ENCODE measurements at regions of chr3 and their contacts with region 1.

Region 1: GRCh38 chr3:99250272-99250671 is 348.8 kb upstream of the DCBLD2 start:
- DNase-seq: peak; percentile 75
- ATAC-seq: peak; percentile 68
- H3K4me3 ChIP-seq: no peak overlapping the region
- H3K27ac ChIP-seq: no peak overlapping the region
- H3K4me1 ChIP-seq: peaks cover 54% of the 10 kb centered on the region
- H3K27me3 ChIP-seq: no peaks in the 10 kb centered on the region
- CTCF ChIP-seq: no peak

Region 2: GRCh38 chr3:99084826-99085225 is 165.4 kb before region 1 on chr3:
- CTCF ChIA-PET with region 1: no interaction called
- POLR2A ChIA-PET with region 1: no interaction called
- intact Hi-C with region 1: loop called (anchors 5 kb)
- DNase-seq: peak; percentile 95
- ATAC-seq: peak; percentile 89
- H3K4me3 ChIP-seq: peak overlapping the region; percentile 53
- H3K27ac ChIP-seq: peak overlapping the region; percentile 92
- H3K4me1 ChIP-seq: peaks cover 49% of the 10 kb centered on the region
- H3K27me3 ChIP-seq: no peaks in the 10 kb centered on the region
- CTCF ChIP-seq: no peak

Region 3: DNA sequence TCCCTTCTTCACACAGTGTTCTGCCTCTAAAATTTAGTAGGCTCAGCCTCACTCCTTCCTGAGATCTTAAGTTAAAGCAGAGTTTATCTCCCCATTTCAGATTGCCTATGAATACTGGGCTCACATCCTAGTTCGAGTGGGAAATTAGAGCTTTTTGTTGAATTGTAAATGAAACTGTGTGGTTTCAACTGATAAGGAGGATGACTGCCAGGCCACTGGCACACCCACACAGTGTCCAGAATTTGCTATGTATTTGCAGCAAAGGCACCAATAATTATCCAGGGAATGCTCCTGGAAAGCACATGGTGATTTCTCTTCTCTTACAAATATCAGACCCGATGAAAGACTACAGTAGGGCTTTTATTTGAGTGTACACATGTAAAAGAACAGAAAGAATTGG is 80.0 kb after region 1 on chr3:
- CTCF ChIA-PET with region 1: no interaction called
- POLR2A ChIA-PET with region 1: no interaction called
- intact Hi-C with region 1: loop called (anchors 2 kb)
- DNase-seq: peak; percentile 31
- ATAC-seq: peak; percentile 23
- H3K4me3 ChIP-seq: no peak overlapping the region
- H3K27ac ChIP-seq: no peak overlapping the region
- H3K4me1 ChIP-seq: peaks cover 22% of the 10 kb centered on the region
- H3K27me3 ChIP-seq: no peaks in the 10 kb centered on the region
- CTCF ChIP-seq: no peak

Region 4: GRCh38 chr3:99520513-99520912 is 270.2 kb after region 1 on chr3:
- CTCF ChIA-PET with region 1: no interaction called
- POLR2A ChIA-PET with region 1: no interaction called
- intact Hi-C with region 1: loop called (anchors 5 kb)
- DNase-seq: peak; percentile 75
- ATAC-seq: peak; percentile 79
- H3K4me3 ChIP-seq: peak overlapping the region; percentile 17; the same call in 1 of the 2 replicates
- H3K27ac ChIP-seq: peak overlapping the region; percentile 77
- H3K4me1 ChIP-seq: peaks cover 35% of the 10 kb centered on the region
- H3K27me3 ChIP-seq: no peaks in the 10 kb centered on the region
- CTCF ChIP-seq: no peak

Region 5: DNA sequence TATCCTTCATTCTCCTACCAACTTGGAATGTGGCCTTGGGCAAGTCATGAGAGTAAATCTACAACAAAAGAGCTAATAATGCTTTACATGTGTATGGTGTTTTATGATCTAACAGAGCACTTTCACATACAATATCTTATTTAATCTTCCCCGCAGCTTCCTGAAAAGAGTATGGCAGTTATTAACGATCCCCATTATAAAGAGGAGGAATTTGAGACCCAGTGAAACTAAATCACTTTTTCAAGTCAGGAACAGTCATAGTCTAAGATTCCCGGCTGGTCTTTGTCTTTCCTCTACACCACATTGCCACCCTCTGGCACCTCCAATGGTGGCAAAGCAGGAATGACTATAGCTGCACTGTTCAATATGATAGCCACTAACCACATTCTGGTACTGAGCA is 497.6 kb after region 1 on chr3:
- CTCF ChIA-PET with region 1: no interaction called
- POLR2A ChIA-PET with region 1: no interaction called
- intact Hi-C with region 1: loop called (anchors 10 kb)
- DNase-seq: peak; percentile 81
- ATAC-seq: peak; percentile 94
- H3K4me3 ChIP-seq: no peak overlapping the region
- H3K27ac ChIP-seq: no peak overlapping the region
- H3K4me1 ChIP-seq: peaks cover 23% of the 10 kb centered on the region
- H3K27me3 ChIP-seq: no peaks in the 10 kb centered on the region
- CTCF ChIP-seq: peak; percentile 90

Measured in PC-3 (cell line).